ENCODE measurements at regions of chr6 and their contacts with region 1.

Region 1: GRCh38 chr6:117602151-117602898 is at the start of gene GOPC:
- DNase-seq: peak; percentile 98
- H3K4me3 Mint-ChIP-seq: peak within 1 kb of the TSS; percentile 99
- H3K27ac Mint-ChIP-seq: peak within 1 kb of the TSS; percentile 100
- H3K4me1 Mint-ChIP-seq: peaks cover 31% of the 10 kb centered on the region
- H3K27me3 Mint-ChIP-seq: peaks cover 3% of the 10 kb centered on the region
- total RNA-seq, gene GOPC: 22.2 TPM in 2 replicates

Region 2: GRCh38 chr6:116680975-116681808 is 921.1 kb before region 1 on chr6 and contains the start of gene KPNA5:
- intact Hi-C with region 1: loop called (anchors 5 kb)
- DNase-seq: peak; percentile 97
- H3K4me3 Mint-ChIP-seq: peak within 1 kb of the TSS; percentile 99
- H3K27ac Mint-ChIP-seq: peak within 1 kb of the TSS; percentile 99
- H3K4me1 Mint-ChIP-seq: peaks cover 29% of the 10 kb centered on the region
- H3K27me3 Mint-ChIP-seq: no peaks in the 10 kb centered on the region
- total RNA-seq, gene KPNA5: 7.2 and 7.7 TPM in 2 replicates

Region 3: GRCh38 chr6:117352466-117353081 is 249.8 kb before region 1 on chr6:
- intact Hi-C with region 1: no loop called
- DNase-seq: no peak
- H3K4me3 Mint-ChIP-seq: no peak overlapping the region
- H3K27ac Mint-ChIP-seq: no peak overlapping the region
- H3K4me1 Mint-ChIP-seq: no peaks in the 10 kb centered on the region
- H3K27me3 Mint-ChIP-seq: peaks cover 5% of the 10 kb centered on the region

Region 4: DNA sequence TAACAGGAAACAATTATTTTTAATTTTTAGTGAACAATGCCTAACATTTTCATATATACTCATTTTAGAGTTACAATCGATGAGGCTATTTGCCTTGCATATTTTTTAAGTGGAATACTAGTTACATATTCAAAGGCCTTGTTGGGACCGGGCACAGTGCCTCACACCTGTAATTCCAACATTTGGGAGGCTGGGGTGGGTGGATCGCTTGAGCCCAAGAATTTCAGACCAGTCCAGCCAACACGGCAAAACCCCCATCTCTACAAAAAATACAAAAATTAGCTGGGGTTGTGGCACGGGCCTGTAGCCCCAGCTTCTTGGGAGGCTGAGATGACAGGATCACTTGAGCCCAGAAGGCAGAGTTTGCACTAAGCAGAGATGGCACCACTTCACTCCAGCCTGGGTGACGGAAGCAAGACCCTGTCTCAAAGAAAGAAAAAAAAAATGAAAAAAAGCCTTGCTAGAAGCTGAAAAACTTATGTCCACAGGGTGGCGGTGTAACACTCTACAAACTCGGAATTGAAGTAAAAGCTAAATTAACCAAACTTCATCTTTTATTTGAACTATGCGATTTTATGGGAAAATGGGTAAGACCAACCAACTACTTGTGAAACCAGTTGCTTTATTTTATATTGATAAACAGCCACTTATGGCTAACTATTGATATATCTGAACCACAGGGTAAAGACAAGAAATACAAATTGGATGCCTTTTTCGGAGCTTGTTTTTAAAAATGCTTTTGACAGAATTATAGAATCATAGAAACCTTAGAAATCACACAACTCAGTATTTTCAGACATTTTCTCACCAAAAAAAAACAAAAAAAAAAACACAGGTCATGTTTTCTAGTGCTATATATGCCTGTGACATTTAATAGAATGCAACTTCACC is 152.5 kb before region 1 on chr6:
- intact Hi-C with region 1: loop called (anchors 1 kb)
- DNase-seq: peak; percentile 88
- H3K4me3 Mint-ChIP-seq: no peak overlapping the region
- H3K27ac Mint-ChIP-seq: no peak overlapping the region
- H3K4me1 Mint-ChIP-seq: no peaks in the 10 kb centered on the region
- H3K27me3 Mint-ChIP-seq: peaks cover 47% of the 10 kb centered on the region

Region 5: DNA sequence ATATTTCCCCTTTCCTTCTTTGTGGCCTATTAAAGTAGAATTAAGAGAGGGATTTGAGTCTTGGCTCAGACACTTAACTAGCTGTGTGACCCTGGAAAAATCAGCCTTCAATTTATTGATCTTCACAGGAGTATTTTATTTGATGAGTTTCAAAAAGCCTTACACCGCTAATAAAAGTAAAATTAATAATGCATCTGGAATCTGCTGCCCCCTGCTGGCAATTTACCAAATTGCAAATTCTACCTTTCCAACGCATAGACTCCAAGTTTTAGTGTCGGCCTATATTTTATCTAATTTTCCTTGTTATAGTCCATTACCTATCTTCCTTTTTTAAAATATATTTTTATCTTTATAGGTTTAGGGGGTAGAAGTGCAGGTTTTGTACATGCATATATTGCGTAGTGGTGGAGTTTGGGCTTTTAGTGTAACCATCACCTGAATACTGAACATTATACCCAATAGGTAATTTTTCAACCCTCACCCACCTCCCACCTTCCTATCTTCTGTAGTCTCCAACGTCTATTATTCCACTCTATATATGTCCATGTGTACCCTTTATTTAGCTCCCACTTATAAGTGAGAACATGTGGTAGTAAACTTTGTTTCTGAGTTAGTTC is 46.3 kb before region 1 on chr6:
- intact Hi-C with region 1: loop called (anchors 2 kb)
- DNase-seq: peak; percentile 86
- H3K4me3 Mint-ChIP-seq: no peak overlapping the region
- H3K27ac Mint-ChIP-seq: no peak overlapping the region
- H3K4me1 Mint-ChIP-seq: peaks cover 1% of the 10 kb centered on the region
- H3K27me3 Mint-ChIP-seq: peaks cover 2% of the 10 kb centered on the region

Region 6: DNA sequence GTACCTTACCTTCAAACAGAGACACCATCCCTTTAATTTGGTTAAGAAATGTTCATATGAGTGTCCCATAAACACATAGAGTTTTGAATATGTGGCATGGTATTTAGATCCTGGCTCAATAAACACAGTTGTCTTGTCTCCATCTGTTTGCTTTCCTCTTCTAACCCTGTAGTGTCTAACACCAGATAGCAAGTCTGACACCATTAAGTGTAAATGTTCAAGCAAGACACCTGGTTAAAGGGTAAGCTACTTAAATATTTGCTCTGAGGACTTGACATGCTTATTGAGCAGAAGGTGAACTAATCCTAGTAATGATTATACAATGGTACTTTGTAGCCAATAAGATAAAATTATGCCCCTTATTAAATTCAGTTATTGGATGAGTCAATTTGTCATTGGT is 26.8 kb after region 1 on chr6:
- intact Hi-C with region 1: no loop called
- DNase-seq: no peak
- H3K4me3 Mint-ChIP-seq: no peak overlapping the region
- H3K27ac Mint-ChIP-seq: no peak overlapping the region
- H3K4me1 Mint-ChIP-seq: no peaks in the 10 kb centered on the region
- H3K27me3 Mint-ChIP-seq: peaks cover 6% of the 10 kb centered on the region

Region 7: DNA sequence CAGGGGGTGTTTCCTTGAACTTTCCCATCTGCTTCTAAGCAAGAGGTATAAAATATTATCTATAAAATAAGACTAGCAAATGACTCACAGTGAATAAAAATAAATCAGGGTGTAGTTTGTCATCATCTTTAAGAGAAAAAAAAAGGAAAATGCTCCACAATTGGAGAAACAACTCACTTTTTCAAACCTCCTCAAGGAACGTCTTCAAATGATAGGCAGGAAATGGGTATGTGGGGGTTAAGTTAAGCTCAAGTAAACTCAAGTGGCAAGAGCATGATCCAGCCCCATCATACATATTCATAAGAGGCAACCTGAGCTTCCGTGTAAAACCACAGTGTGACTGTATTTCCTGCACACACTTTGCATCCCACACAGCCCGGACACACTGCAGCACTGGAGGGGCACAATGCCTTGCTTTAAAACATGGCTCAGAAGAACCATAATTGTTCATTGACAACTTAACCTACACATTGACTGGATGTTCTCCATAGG is 1107.6 kb after region 1 on chr6:
- intact Hi-C with region 1: loop called (anchors 5 kb)
- DNase-seq: peak; percentile 93
- H3K4me3 Mint-ChIP-seq: peak overlapping the region; percentile 90
- H3K27ac Mint-ChIP-seq: peak overlapping the region; percentile 92
- H3K4me1 Mint-ChIP-seq: peaks cover 65% of the 10 kb centered on the region
- H3K27me3 Mint-ChIP-seq: no peaks in the 10 kb centered on the region

Measured in activated CD4-positive, alpha-beta T cell treated with anti-CD3 and anti-CD28 coated beads, Interleukin-2, amount 10 ng/mL, durations not matched to agents 24 days and 14 days (primary cell).